Right ventricle myocardium superior (tissue), 1 donor: ENCODE measurements at regions of chrX and their contacts with region 1.

Region 1: DNA sequence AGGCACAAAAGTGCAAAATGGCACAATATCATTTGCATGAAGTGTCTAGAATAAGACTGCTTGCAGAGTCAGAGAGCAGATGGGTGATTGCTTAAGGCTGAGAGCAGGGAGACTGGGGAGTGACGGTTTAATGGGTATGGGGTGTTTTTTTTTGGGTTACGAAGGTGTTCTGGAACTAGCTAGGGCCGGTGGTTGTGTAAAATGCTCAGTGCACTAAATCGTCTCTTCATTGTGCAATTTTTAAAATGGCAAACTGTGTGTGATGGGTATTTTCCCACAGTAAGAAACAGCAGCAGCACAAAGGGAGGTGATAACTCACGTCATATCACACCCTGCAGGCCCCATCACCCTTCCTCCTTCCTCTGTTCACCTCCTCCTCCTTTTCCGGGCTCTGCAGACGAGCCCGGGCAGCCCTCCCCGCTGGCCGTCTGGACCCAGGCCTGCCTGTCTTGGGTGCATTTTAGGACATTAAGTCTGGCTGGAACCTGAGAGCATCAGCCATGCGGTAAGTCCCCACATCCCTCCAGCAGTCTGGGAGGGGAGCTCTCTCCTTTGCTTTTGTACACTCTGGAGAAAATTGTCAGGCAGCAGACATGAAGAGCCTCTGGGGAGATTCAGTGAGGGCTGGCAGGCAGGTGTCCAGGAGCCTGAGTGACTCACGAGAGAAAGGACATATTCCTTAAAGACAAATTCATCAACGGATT is 42.7 kb downstream of the ASMT start:
- DNase-seq: no peak
- ATAC-seq: peak; percentile 36

Region 2: GRCh38 chrX:2401590-2402360 is 744.3 kb after region 1 on chrX:
- intact Hi-C with region 1: no loop called
- DNase-seq: peak; percentile 51
- ATAC-seq: peak; percentile 90

Region 3: GRCh38 chrX:2627272-2627867 is 969.9 kb after region 1 on chrX:
- intact Hi-C with region 1: loop called (anchors 10 kb)
- DNase-seq: no peak
- ATAC-seq: peak; percentile 78